ENCODE measurements at regions of chr11 and their contacts with region 1.

Region 1: GRCh38 chr11:33065445-33066178 is 26.2 kb downstream of the TCP11L1 start:
- DNase-seq: peak; percentile 84 to 86
- H3K4me3 ChIP-seq: no peak overlapping the region
- H3K4me3 Mint-ChIP-seq: no peak overlapping the region
- H3K27ac Mint-ChIP-seq: no peak overlapping the region
- H3K4me1 ChIP-seq: peaks cover 22% of the 10 kb centered on the region
- H3K4me1 Mint-ChIP-seq: peaks cover 15% of the 10 kb centered on the region
- H3K27me3 ChIP-seq: no peaks in the 10 kb centered on the region
- H3K27me3 Mint-ChIP-seq: no peaks in the 10 kb centered on the region
- CTCF ChIP-seq: peak; percentile 95 to 99

Region 2: DNA sequence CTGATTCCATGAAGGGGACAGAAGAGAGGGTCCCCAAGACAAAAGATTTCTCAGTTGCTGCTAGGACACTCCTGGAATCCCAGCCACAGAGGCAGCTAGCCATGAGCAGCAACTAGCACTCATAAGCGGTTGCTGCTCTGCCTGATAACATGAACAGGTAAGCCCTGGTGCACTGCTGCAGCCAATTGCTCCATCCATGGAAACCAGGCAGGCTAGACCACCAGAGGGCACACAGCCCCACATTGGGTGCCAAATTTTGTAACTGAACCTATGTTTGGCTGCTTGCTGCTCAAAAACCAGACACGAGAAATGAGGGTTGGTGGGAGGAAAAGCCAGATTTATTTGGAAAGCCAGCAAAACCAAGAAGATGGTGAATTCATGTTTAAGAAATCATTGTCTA is 194.9 kb before region 1 on chr11:
- CTCF ChIA-PET with region 1: no interaction called
- POLR2A ChIA-PET with region 1: no interaction called
- intact Hi-C with region 1: loop called (anchors 1 kb)
- DNase-seq: peak; percentile 63 to 71
- H3K4me3 ChIP-seq: no peak overlapping the region
- H3K4me3 Mint-ChIP-seq: no peak overlapping the region
- H3K27ac Mint-ChIP-seq: no peak overlapping the region
- H3K4me1 ChIP-seq: peaks cover 9% of the 10 kb centered on the region
- H3K4me1 Mint-ChIP-seq: peaks cover 10% of the 10 kb centered on the region
- H3K27me3 ChIP-seq: no peaks in the 10 kb centered on the region
- H3K27me3 Mint-ChIP-seq: no peaks in the 10 kb centered on the region
- CTCF ChIP-seq: peak; percentile 59 to 75

Region 3: DNA sequence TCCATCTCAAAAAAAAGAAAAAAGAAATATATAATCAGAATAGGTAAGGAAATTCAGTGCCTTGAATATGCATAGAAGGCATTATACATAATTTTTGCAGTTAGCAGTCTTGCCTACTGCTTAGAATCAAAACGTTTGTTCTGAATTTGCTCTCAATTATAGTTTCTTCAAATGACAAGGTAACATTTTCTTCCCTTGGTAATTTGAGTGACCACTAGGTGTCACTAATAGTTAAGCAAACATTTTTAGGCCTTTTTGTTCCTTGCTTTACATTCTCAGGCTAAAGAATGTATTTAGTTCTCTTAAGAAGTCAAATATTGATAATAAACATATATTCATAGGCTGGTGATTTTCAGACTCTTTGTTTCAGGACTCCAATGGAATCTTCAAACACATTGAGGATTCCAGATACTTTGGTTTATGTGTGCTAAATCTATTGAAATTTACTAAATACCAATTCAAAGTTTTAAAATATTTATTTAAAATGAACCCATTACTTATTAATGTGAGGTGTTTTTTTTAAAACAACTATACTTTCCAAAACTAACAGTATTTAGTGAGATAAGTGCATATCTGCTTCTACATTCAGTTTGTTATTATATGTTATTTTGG is 105.0 kb before region 1 on chr11:
- CTCF ChIA-PET with region 1: interaction called, 8 read pairs
- POLR2A ChIA-PET with region 1: no interaction called
- intact Hi-C with region 1: loop called (anchors 1 kb)
- DNase-seq: peak in 1 of 2 experiments; percentile 40
- H3K4me3 ChIP-seq: no peak overlapping the region
- H3K4me3 Mint-ChIP-seq: no peak overlapping the region
- H3K27ac Mint-ChIP-seq: no peak overlapping the region
- H3K4me1 ChIP-seq: no peaks in the 10 kb centered on the region
- H3K4me1 Mint-ChIP-seq: no peaks in the 10 kb centered on the region
- H3K27me3 ChIP-seq: no peaks in the 10 kb centered on the region
- H3K27me3 Mint-ChIP-seq: no peaks in the 10 kb centered on the region
- CTCF ChIP-seq: peak; percentile 58 to 60

Region 4: GRCh38 chr11:33015621-33016551 is 49.7 kb before region 1 on chr11 and contains the start of gene DEPDC7:
- CTCF ChIA-PET with region 1: interaction called, 12 read pairs
- POLR2A ChIA-PET with region 1: interaction called, 5 read pairs
- intact Hi-C with region 1: loop called (anchors 2 kb)
- DNase-seq: peak; percentile 94 to 96
- H3K4me3 ChIP-seq: peak within 1 kb of the TSS; percentile 73
- H3K4me3 Mint-ChIP-seq: peak within 1 kb of the TSS; percentile 98
- H3K27ac Mint-ChIP-seq: peak within 1 kb of the TSS; percentile 87
- H3K4me1 ChIP-seq: peaks cover 26% of the 10 kb centered on the region; the same call in 1 of the 2 replicates
- H3K4me1 Mint-ChIP-seq: peaks cover 19% of the 10 kb centered on the region
- H3K27me3 ChIP-seq: no peaks in the 10 kb centered on the region
- H3K27me3 Mint-ChIP-seq: no peaks in the 10 kb centered on the region
- CTCF ChIP-seq: no peak
- total RNA-seq, gene DEPDC7: 17.0 and 17.2 TPM in 2 replicates

Region 5: GRCh38 chr11:33045551-33046255 is 19.9 kb before region 1 on chr11:
- CTCF ChIA-PET with region 1: no interaction called
- POLR2A ChIA-PET with region 1: interaction called, 3 read pairs
- intact Hi-C with region 1: loop called (anchors 1 kb)
- DNase-seq: peak; percentile 45 to 76
- H3K4me3 ChIP-seq: no peak overlapping the region
- H3K4me3 Mint-ChIP-seq: no peak overlapping the region
- H3K27ac Mint-ChIP-seq: peak overlapping the region; percentile 40
- H3K4me1 ChIP-seq: peaks cover 38% of the 10 kb centered on the region
- H3K4me1 Mint-ChIP-seq: peaks cover 16% of the 10 kb centered on the region
- H3K27me3 ChIP-seq: no peaks in the 10 kb centered on the region
- H3K27me3 Mint-ChIP-seq: no peaks in the 10 kb centered on the region
- CTCF ChIP-seq: no peak

Region 6: DNA sequence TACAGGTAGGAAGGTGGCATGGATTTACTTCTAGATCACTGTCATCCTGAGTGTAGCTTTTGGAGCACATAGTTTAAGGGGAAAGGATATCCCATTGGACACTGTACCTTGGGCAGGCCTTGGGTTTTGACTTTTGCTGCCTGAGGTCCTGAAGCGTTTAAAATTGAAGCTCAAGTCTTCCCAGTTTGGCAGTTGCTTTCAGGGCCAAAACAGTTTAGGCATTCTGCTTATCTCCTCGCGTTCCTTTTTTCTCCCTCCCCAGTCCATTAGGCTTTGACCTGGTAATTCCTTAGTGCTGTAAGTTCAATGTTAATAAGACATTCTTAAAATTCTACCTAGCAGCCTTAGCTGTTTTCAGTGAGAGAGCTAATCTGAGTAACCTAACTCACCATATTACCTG is 60.0 kb after region 1 on chr11:
- CTCF ChIA-PET with region 1: no interaction called
- POLR2A ChIA-PET with region 1: no interaction called
- intact Hi-C with region 1: no loop called
- DNase-seq: no peak
- H3K4me3 ChIP-seq: no peak overlapping the region
- H3K4me3 Mint-ChIP-seq: no peak overlapping the region
- H3K27ac Mint-ChIP-seq: no peak overlapping the region
- H3K4me1 ChIP-seq: peaks cover 39% of the 10 kb centered on the region
- H3K4me1 Mint-ChIP-seq: peaks cover 14% of the 10 kb centered on the region
- H3K27me3 ChIP-seq: no peaks in the 10 kb centered on the region
- H3K27me3 Mint-ChIP-seq: no peaks in the 10 kb centered on the region
- CTCF ChIP-seq: no peak